ENCODE measurements at regions of chr17 and their contacts with region 1.

Region 1: GRCh38 chr17:78421484-78422266 is 43.2 kb downstream of the PGS1 start:
- DNase-seq: peak; percentile 79 to 82 (median 81)
- ATAC-seq: peak; percentile 86 to 92 (median 88)
- H3K4me3 ChIP-seq: no peak overlapping the region
- H3K27ac ChIP-seq: peak overlapping the region in 1 of 3 donors; percentile 29
- H3K4me1 ChIP-seq: peaks cover 0 to 14% (median 0%) of the 10 kb centered on the region in 4 donors
- H3K27me3 ChIP-seq: no peaks in the 10 kb centered on the region
- CTCF ChIP-seq: peak; percentile 98 to 99 (median 98)
- POLR2A ChIP-seq: no peak

Region 2: GRCh38 chr17:78250891-78251794 is 170.5 kb before region 1 on chr17:
- intact Hi-C with region 1: loop called in 1 of 2 experiments (anchors 2 kb)
- DNase-seq: peak; percentile 89 to 91 (median 90)
- ATAC-seq: peak; percentile 82 to 91 (median 87)
- H3K4me3 ChIP-seq: no peak overlapping the region
- H3K27ac ChIP-seq: no peak overlapping the region
- H3K4me1 ChIP-seq: peaks cover 0 to 12% (median 3%) of the 10 kb centered on the region in 4 donors
- H3K27me3 ChIP-seq: no peaks in the 10 kb centered on the region
- CTCF ChIP-seq: peak; percentile 98 to 100 (median 100)
- POLR2A ChIP-seq: no peak

Region 3: DNA sequence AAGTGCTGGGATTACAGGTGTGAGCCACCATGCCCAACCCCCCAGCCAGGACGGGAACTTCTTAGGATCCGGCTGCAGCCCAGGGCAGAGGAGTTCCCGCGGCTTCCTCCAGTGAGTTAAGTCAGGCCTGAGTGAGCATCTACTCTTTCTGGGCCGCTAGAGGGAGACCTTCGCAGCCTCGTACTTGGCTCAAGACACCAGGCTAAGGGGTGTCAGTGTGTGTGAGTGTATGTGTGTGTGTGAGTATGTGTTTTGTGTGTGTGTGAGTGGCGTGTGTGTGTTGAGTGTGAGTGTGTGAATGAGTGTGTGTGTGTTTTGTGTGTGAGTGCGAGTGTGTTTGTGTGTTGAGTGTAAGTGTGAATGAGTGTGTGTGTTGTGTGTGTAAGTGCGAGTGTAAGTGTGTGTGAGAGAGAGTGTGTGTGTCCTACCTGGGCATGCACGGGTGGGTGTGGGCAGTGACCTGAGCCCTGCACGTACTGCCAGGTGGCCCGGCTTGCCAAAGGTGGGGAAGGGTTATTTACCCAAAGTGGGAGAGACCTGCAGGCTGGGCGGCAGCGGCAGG is 131.8 kb before region 1 on chr17:
- intact Hi-C with region 1: loop called (anchors 5 to 10 kb)
- DNase-seq: peak; percentile 73 to 79 (median 77)
- ATAC-seq: peak; percentile 74 to 80 (median 76)
- H3K4me3 ChIP-seq: no peak overlapping the region
- H3K27ac ChIP-seq: no peak overlapping the region
- H3K4me1 ChIP-seq: peaks cover 0 to 34% (median 16%) of the 10 kb centered on the region in 4 donors
- H3K27me3 ChIP-seq: no peaks in the 10 kb centered on the region
- CTCF ChIP-seq: peak; percentile 57 to 75 (median 66)
- POLR2A ChIP-seq: no peak

Region 4: DNA sequence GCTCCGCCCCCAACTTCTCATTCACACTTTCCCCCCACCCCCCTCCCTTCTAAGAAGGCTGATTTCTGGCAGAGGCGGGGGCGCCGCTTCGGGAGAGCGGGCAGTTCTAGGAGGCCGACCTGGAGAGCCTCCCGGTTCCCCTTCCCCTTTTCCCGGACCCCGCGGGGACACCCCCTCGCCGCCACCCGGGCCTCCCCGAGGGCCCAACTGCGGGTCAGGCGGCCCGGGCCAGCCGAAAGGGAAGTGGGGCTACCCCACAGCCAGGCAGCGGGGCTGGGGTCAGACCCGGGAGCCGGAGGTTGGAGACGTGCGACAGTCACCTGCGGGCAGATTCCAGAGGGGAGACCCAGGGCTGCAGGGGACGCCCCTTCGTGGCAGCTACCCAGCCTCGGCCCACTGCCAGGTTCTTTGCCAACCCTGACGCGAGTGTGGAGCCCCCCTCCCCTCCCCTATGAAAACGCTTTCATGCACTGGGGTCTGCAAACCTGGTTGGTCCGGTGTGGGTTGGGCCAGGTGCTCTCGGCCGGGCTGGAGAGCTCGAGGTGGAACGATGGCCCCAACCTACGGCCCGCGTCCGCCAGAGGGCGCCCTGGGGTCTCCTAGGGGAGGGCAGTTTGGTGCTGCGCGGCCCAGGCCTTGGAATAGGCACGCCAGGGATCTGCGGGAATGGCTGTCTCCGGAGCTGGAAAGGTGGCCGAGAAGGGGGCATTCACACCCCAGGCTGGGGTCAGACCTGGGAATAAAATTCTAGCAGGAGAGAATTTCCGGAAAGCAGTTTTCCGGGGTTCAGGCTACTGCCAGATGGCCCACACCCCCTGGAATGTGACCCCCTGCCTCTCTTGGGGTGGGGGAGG is 61.1 kb before region 1 on chr17:
- intact Hi-C with region 1: loop called (anchors 5 kb)
- DNase-seq: peak; percentile 96 to 97 (median 96)
- ATAC-seq: peak; percentile 55 to 79 (median 68)
- H3K4me3 ChIP-seq: peak overlapping the region; percentile 61 to 75 (median 68)
- H3K27ac ChIP-seq: peak overlapping the region; percentile 85 to 92 (median 88)
- H3K4me1 ChIP-seq: peaks cover 0 to 51% (median 7%) of the 10 kb centered on the region in 4 donors
- H3K27me3 ChIP-seq: no peaks in the 10 kb centered on the region
- CTCF ChIP-seq: peak; percentile 89 to 97 (median 93)
- POLR2A ChIP-seq: no peak

Region 5: GRCh38 chr17:78365561-78366108 is 56.0 kb before region 1 on chr17:
- intact Hi-C with region 1: loop called (anchors 5 kb)
- DNase-seq: peak in 1 of 3 donors; percentile 52
- ATAC-seq: peak; percentile 24 to 42 (median 33)
- H3K4me3 ChIP-seq: no peak overlapping the region
- H3K27ac ChIP-seq: peak overlapping the region in 1 of 3 donors; percentile 28
- H3K4me1 ChIP-seq: peaks cover 0 to 14% (median 0%) of the 10 kb centered on the region in 4 donors
- H3K27me3 ChIP-seq: no peaks in the 10 kb centered on the region
- CTCF ChIP-seq: no peak
- POLR2A ChIP-seq: no peak

Region 6: DNA sequence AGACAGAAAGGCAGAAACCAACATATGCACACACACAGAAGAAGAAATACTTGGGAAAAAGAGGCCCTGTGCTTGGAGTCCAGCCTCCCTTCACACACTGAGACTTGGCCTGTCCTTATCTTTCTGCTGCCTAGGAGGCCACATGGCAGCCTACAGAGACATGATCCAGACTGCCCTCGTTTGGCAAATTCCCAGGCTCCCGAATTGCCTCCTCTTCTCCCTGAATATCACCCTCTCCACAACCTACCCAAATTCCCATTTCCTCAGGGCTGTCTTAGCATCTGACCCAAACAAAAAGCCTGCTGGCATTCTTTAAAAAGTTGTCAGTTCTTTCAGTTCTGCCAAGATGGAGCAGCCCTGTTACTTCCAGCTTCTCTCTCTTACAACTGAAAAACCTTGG is 95.7 kb after region 1 on chr17:
- intact Hi-C with region 1: no loop called
- DNase-seq: no peak
- ATAC-seq: no peak
- H3K4me3 ChIP-seq: no peak overlapping the region
- H3K27ac ChIP-seq: no peak overlapping the region
- H3K4me1 ChIP-seq: no peaks in the 10 kb centered on the region
- H3K27me3 ChIP-seq: no peaks in the 10 kb centered on the region
- CTCF ChIP-seq: no peak
- POLR2A ChIP-seq: no peak

Measured in right lobe of liver (tissue), 6 donors.